Endothelial cell of umbilical vein (primary cell): ENCODE measurements at regions of chr15 and their contacts with region 1.

Region 1: GRCh38 chr15:80567721-80568157 is 127.4 kb upstream of the ABHD17C start:
- DNase-seq: peak; percentile 88
- H3K4me3 ChIP-seq: no peak overlapping the region
- H3K27ac ChIP-seq: no peak overlapping the region
- H3K4me1 ChIP-seq: peaks cover 3% of the 10 kb centered on the region
- H3K27me3 ChIP-seq: peaks cover 0 to 4% of the 10 kb centered on the region in 2 experiments
- CTCF ChIP-seq: peak; percentile 77 to 78
- POLR2A ChIP-seq: no peak

Region 2: GRCh38 chr15:78909791-78910228 is 1657.9 kb before region 1 on chr15:
- CTCF ChIA-PET with region 1: no interaction called
- POLR2A ChIA-PET with region 1: no interaction called
- dilution Hi-C with region 1: no loop called
- intact Hi-C with region 1: no loop called
- DNase-seq: peak; percentile 52
- H3K4me3 ChIP-seq: no peak overlapping the region
- H3K27ac ChIP-seq: no peak overlapping the region
- H3K4me1 ChIP-seq: no peaks in the 10 kb centered on the region
- H3K27me3 ChIP-seq: no peaks in the 10 kb centered on the region
- CTCF ChIP-seq: peak; percentile 61 to 65
- POLR2A ChIP-seq: no peak

Region 3: DNA sequence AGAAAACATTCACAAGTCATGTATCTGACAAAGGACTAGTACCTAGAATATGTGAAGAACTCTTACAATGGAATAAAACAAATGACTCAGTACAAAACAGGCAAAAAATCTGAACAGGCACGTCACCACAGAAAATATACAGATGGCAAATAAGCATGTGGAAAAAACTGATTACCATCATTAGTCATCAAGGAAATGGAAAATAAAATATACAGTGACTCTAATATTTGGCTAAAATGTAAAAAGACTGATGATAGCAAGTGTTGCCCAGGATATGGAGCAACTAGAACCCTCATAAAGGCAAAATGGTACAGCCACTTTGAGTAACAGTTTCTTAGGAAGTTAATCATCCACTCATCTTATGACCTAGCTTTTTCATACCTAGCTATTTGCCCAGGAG is 31.6 kb after region 1 on chr15:
- CTCF ChIA-PET with region 1: interaction called, 12 read pairs
- POLR2A ChIA-PET with region 1: no interaction called
- dilution Hi-C with region 1: no loop called
- intact Hi-C with region 1: no loop called
- DNase-seq: peak; percentile 75
- H3K4me3 ChIP-seq: no peak overlapping the region
- H3K27ac ChIP-seq: no peak overlapping the region
- H3K4me1 ChIP-seq: peaks cover 9% of the 10 kb centered on the region
- H3K27me3 ChIP-seq: no peaks in the 10 kb centered on the region
- CTCF ChIP-seq: no peak
- POLR2A ChIP-seq: no peak

Region 4: GRCh38 chr15:80660122-80660521 is 92.4 kb after region 1 on chr15:
- CTCF ChIA-PET with region 1: interaction called, 31 read pairs
- POLR2A ChIA-PET with region 1: no interaction called
- dilution Hi-C with region 1: no loop called
- intact Hi-C with region 1: loop called (anchors 2 kb)
- DNase-seq: peak; percentile 24
- H3K4me3 ChIP-seq: no peak overlapping the region
- H3K27ac ChIP-seq: no peak overlapping the region
- H3K4me1 ChIP-seq: no peaks in the 10 kb centered on the region
- H3K27me3 ChIP-seq: peaks cover 0 to under 1% of the 10 kb centered on the region in 2 experiments
- CTCF ChIP-seq: peak; percentile 17 to 30
- POLR2A ChIP-seq: no peak

Region 5: GRCh38 chr15:80710635-80711554 is 143.2 kb after region 1 on chr15:
- CTCF ChIA-PET with region 1: interaction called, 9 read pairs
- POLR2A ChIA-PET with region 1: no interaction called
- dilution Hi-C with region 1: loop called (anchors 25 kb)
- intact Hi-C with region 1: no loop called
- DNase-seq: no peak
- H3K4me3 ChIP-seq: no peak overlapping the region
- H3K27ac ChIP-seq: no peak overlapping the region
- H3K4me1 ChIP-seq: no peaks in the 10 kb centered on the region
- H3K27me3 ChIP-seq: no peaks in the 10 kb centered on the region
- CTCF ChIP-seq: no peak
- POLR2A ChIP-seq: no peak

Region 6: DNA sequence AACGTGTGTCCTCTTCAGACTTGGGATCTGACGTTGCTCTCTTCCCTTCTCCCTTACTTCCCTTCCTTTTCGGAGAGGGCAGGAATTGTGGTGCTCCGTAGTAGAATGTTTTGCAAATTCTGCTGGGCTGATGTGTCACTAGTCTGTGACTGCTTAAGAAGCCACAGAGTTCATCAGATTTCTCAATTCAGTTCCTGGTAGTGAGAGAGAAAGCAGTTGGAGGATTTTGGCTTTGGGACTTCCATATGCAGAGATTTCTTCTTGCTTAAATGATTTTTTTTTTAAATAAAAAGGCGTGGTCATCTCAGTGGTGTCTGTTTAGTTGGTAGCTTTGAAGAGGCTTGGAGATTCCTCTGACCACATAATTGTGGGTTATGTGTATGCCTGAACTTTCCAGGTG is 221.6 kb after region 1 on chr15:
- CTCF ChIA-PET with region 1: interaction called, 14 read pairs
- POLR2A ChIA-PET with region 1: no interaction called
- dilution Hi-C with region 1: no loop called
- intact Hi-C with region 1: no loop called
- DNase-seq: no peak
- H3K4me3 ChIP-seq: no peak overlapping the region
- H3K27ac ChIP-seq: no peak overlapping the region
- H3K4me1 ChIP-seq: no peaks in the 10 kb centered on the region
- H3K27me3 ChIP-seq: peaks cover 0 to 4% of the 10 kb centered on the region in 2 experiments
- CTCF ChIP-seq: no peak
- POLR2A ChIP-seq: no peak